SK-N-SH (cell line): ENCODE measurements at regions of chr3 and their contacts with region 1.

Region 1: GRCh38 chr3:53288214-53288613 is 32.4 kb upstream of the TKT start:
- DNase-seq: no peak
- H3K4me3 ChIP-seq: no peak overlapping the region
- H3K27ac ChIP-seq: 0 out of 4 replicates have a peak overlapping the region, but pooled peaks of 1 of the 2 experiments have one; percentile 61
- H3K4me1 ChIP-seq: no peaks in the 10 kb centered on the region
- H3K27me3 ChIP-seq: no peaks in the 10 kb centered on the region
- CTCF ChIP-seq: no peak
- EP300 ChIP-seq: no peak
- RAD21 ChIP-seq: no peak

Region 2: DNA sequence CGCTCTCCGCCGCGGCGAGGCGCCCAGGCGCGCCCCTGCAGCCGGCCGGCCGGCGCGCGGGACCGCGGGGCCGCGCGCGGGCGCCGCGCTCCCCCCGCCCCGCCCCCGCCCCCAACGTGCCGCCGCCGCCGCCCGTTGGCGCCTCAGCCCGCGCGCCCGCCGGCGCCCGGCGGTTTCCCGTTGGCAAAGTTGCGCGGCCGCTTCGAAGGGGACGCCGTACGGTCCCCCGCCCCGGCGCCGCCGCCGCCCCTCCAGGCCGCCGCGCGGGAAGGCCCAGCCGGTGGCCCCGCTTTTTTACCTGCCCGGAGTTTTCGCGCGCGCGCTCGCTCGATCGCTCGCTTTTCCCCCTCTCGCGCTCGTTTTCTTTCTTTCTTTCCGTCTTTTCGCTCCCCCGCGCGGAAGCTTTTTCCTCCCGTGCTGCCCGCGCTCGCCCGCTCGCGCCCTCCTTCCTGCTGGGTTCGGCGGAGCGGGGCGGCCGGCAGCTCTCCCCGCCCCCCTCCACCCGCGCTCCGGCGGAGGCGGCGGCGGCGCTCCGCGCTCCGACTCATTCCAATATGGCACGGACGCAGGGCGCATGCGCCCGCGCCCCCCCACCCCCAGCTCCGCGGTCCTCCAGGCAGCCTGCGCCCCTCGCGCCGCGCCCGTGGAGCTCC is 242.6 kb before region 1 on chr3 and contains the start of gene SFMBT1:
- CTCF ChIA-PET with region 1: no interaction called
- POLR2A ChIA-PET with region 1: no interaction called
- DNase-seq: peak; percentile 96
- H3K4me3 ChIP-seq: peak within 1 kb of the TSS; percentile 75 to 79
- H3K27ac ChIP-seq: peak within 1 kb of the TSS in 1 of 2 experiments; percentile 70; a peak in 2 of 4 replicates
- H3K4me1 ChIP-seq: peaks cover 0 to 6% of the 10 kb centered on the region in 2 experiments; a peak in 2 of 4 replicates
- H3K27me3 ChIP-seq: no peaks in the 10 kb centered on the region; the same call in 1 of the 2 replicates
- CTCF ChIP-seq: no peak
- EP300 ChIP-seq: no peak
- RAD21 ChIP-seq: no peak
- polyA plus RNA-seq, gene SFMBT1: 0.62 and 0.72 TPM in 2 replicates

Region 3: GRCh38 chr3:53303957-53304356 is 15.7 kb after region 1 on chr3:
- CTCF ChIA-PET with region 1: interaction called, 12 read pairs
- POLR2A ChIA-PET with region 1: no interaction called
- DNase-seq: no peak
- H3K4me3 ChIP-seq: no peak overlapping the region
- H3K27ac ChIP-seq: no peak overlapping the region
- H3K4me1 ChIP-seq: no peaks in the 10 kb centered on the region
- H3K27me3 ChIP-seq: no peaks in the 10 kb centered on the region
- CTCF ChIP-seq: no peak
- EP300 ChIP-seq: no peak
- RAD21 ChIP-seq: no peak